Posterior vena cava (tissue), 2 donors: ENCODE measurements at regions of chr3 and their contacts with region 1.

Region 1: GRCh38 chr3:55313666-55314065 is 173.4 kb downstream of the WNT5A start:
- DNase-seq: no peak

Region 2: GRCh38 chr3:54939557-54940300 is 373.9 kb before region 1 on chr3:
- intact Hi-C with region 1: loop called in 1 of 2 experiments (anchors 10 kb)
- DNase-seq: no peak